AG04449 (cell line): ENCODE measurements at regions of chr20 and their contacts with region 1.

Region 1: GRCh38 chr20:62793912-62794724 is 2.2 kb upstream of the MRGBP start:
- DNase-seq: peak; percentile 49
- H3K4me3 ChIP-seq: peak overlapping the region; percentile 71
- CTCF ChIP-seq: no peak

Region 2: DNA sequence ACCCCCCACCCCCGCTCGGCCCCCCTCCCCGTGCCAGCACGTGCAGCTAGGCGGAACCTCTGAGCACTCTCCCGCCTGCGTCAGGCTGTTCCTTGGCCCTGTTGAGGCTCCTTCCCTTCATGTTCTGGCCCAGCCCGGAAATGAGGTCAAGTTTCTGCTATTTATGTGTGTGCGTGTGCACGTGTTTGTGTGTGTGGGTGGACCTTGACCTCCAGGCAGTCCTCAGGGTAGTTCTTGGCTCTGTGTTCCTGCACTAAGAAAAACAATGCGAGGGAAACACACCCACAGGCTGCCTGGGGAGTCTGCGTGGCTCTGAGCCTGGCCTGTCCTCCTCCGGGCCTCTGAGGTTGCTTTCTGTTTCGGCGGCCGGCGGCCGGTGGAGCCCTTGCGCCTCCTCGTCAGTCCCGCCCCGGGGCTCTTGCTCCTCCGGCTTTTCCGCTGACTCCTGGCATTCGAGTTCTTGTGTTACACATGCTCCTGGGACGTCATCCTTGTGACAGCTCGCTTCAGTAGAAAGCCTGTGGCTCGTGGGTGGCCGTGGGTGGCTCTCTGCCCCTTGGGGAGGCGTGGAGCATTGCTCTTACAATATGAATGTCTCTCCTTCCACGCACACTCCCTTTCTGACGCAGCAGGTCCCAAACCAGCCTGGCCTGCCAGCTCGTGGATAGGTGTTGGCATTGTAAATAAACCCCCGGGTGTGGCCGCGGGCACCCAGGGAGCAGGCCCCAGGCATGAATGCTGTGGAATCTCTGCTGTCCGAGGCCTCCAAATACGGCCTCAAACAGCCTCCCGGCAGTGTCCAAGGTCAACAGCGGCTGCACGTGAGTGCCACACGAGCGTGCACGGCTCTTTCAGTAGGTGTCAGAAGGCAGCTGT is 141.8 kb before region 1 on chr20:
- CTCF ChIA-PET with region 1: interaction called, 21 read pairs
- POLR2A ChIA-PET with region 1: no interaction called
- DNase-seq: peak; percentile 61
- H3K4me3 ChIP-seq: peak overlapping the region; percentile 13
- CTCF ChIP-seq: no peak

Region 3: DNA sequence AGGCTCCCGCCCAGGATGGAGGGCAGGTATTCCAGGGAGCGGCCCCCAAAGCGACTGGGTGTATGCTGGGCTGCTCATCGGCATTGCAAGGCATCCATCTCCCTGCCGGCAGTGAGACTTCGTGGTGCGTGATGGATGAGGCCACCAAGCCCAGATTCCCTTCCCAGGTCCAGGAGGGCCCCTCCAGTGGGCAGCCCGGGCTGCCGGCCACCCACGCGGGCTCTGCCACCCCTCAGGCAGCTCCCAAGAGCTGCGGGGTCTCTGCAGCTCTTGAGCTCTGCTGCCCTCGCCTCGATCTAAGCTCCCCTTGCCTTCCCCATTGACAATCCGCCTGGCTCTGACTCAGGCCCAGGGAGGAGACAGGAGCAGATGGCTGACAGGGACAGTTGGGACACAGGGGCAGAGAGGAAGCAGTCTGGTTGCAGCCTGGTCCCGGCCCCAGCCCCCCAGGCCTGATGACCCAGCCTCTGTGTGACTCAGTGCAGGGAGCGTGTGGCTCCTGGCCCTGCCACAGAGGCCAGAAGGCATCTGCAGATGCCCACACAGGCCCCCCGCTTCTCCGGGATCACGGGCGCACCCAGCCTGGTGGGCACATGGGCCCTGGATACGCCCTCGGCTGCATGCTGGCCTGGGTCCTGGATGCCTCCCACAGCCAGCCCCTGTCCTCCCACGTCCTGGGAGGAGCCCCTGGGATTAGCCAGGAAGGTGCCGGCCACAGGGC is 118.8 kb before region 1 on chr20:
- CTCF ChIA-PET with region 1: interaction called, 262 read pairs
- POLR2A ChIA-PET with region 1: interaction called, 5 read pairs
- DNase-seq: no peak
- H3K4me3 ChIP-seq: no peak overlapping the region
- CTCF ChIP-seq: no peak

Region 4: DNA sequence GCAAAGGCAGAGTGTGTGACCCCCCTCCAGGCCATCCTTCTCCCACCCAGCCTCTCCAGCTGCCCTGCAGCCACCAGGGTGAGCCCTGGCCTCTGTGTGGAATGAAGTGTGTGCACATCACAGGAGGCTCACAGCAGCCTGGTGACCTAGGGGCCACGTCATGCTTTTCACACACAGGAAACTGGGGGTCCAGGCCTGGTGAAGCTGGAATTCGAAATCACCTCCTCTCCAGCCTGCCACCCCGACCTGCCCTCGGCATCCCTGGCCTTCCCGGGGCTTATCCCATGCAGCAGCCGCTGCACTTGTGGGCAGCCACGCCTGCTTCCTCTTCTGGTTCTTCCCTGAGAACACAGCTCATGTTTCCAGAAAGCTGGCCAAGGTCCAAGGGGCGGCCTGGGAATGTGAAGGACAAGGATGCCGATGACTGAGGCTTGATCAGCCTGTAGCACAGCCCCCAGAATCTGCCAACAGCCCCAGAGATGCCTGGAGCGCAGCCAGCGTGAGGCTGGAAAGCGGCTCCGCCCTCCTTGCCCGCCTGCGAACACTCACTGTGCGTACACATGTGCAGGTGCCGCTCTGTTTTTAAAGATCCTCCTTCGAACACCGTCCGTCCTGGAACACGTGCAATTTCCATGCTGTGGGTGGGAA is 89.7 kb before region 1 on chr20:
- CTCF ChIA-PET with region 1: interaction called, 52 read pairs
- POLR2A ChIA-PET with region 1: no interaction called
- DNase-seq: peak; percentile 38
- H3K4me3 ChIP-seq: no peak overlapping the region
- CTCF ChIP-seq: peak; percentile 5

Region 5: GRCh38 chr20:62782149-62782892 is 11.8 kb before region 1 on chr20:
- CTCF ChIA-PET with region 1: interaction called, 13 read pairs
- POLR2A ChIA-PET with region 1: no interaction called
- DNase-seq: no peak
- H3K4me3 ChIP-seq: no peak overlapping the region
- CTCF ChIP-seq: no peak

Region 6: DNA sequence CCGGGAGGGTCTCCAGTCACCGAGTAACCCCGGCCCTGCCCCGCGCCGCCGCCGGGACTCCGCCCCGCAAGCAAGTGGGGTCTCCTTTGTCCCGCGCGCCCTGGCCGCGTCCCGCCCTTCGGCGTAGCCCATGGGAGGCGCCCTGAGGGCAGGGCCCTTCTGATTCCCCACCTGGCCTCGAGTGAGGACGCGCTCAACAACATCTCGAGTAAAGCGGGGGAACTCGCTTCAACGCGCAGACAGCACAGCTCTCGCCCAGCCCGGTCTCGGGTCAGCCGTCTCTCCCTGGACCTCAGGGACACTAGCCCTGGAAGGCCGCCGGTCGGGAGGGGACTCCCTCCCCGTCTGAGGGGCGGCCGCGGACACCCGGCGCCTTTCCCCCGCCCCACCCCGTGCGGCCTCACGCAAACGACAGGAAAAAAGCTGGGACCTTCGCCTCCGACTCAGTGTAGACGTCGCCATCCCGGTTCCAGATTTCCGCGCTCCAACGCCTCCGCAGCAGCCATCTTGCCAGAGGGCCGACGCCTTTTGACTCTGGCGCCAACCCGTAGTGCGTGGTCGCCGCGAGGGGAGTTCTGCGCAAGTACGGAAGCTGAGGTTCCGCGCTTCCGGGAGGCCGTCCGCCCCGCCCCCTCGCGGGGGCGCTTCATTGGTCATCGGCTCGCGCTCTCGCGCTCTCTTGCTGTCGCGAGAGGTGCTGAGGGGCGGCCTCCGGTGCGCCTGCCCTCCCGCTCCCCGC is 143.4 kb after region 1 on chr20:
- CTCF ChIA-PET with region 1: no interaction called
- POLR2A ChIA-PET with region 1: no interaction called
- DNase-seq: peak; percentile 83
- H3K4me3 ChIP-seq: peak overlapping the region; percentile 94
- CTCF ChIP-seq: no peak